MCF 10A (cell line): ENCODE measurements at regions of chr16 and their contacts with region 1.

Region 1: GRCh38 chr16:83967806-83968305 is at the start of gene NECAB2:
- DNase-seq: peak; percentile 23
- H3K4me3 Mint-ChIP-seq: peak within 1 kb of the TSS; percentile 69
- H3K27ac Mint-ChIP-seq: no peak within 1 kb of the TSS
- H3K4me1 Mint-ChIP-seq: peaks cover 6% of the 10 kb centered on the region
- H3K27me3 Mint-ChIP-seq: peaks cover 10% of the 10 kb centered on the region
- CTCF ChIP-seq: peak; percentile 86
- total RNA-seq, gene NECAB2: 2.3 and 3.6 TPM in 2 replicates

Region 2: DNA sequence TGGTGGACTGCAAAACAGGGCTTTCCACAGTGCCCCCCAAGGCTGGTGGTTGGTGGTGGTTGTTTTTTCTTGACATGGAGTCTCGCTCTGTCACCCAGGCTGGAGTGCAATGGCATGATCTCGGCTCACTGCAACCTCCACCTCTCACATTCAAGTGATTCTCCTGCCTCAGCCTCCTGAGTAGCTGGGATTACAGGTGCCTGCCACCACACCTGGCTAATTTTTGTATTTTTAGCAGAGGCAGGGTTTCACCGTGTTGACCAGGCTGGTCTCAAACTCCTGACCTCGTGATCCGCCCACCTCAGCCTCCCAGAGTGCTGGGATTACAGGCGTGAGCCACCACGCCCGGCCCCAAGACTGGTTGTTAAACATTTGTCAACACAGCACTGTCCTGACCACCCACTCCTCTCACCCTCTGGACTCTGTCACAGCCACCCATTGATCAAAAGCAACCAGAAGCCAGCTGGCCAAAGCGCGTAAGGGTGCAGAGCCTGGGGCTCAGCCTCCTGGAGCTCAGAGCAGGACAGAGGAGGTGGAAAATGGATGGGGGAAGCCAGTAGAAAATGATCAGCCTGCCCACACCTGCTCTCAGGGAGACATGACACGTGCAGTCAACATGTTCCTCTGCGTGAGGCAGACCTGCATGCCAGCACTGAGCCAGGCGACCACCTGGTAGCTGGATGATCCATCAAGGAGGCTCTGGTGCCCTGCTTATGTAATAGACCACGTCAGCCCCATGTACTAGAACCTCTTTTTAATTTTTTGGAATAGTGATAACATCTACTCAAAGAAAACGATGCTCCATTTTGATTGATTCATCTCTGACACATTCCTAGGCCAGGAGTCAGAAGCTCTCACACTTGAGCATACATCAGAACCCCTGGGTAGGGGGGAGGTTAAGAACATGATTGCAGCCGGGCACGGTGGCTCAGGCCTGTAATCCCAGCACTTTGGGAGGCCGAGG is 29.7 kb before region 1 on chr16:
- CTCF ChIA-PET with region 1: no interaction called
- POLR2A ChIA-PET with region 1: no interaction called
- intact Hi-C with region 1: no loop called
- DNase-seq: no peak
- H3K4me3 Mint-ChIP-seq: no peak overlapping the region
- H3K27ac Mint-ChIP-seq: no peak overlapping the region
- H3K4me1 Mint-ChIP-seq: no peaks in the 10 kb centered on the region
- H3K27me3 Mint-ChIP-seq: peaks cover 16% of the 10 kb centered on the region
- CTCF ChIP-seq: no peak

Region 3: GRCh38 chr16:84044118-84044488 is 76.2 kb after region 1 on chr16:
- CTCF ChIA-PET with region 1: interaction called, 12 read pairs
- POLR2A ChIA-PET with region 1: no interaction called
- intact Hi-C with region 1: no loop called
- DNase-seq: peak; percentile 57
- H3K4me3 Mint-ChIP-seq: no peak overlapping the region
- H3K27ac Mint-ChIP-seq: no peak overlapping the region
- H3K4me1 Mint-ChIP-seq: peaks cover 12% of the 10 kb centered on the region
- H3K27me3 Mint-ChIP-seq: peaks cover 31% of the 10 kb centered on the region
- CTCF ChIP-seq: peak; percentile 57

Region 4: GRCh38 chr16:84055366-84055765 is 87.5 kb after region 1 on chr16:
- CTCF ChIA-PET with region 1: interaction called, 13 read pairs
- POLR2A ChIA-PET with region 1: interaction called, 3 read pairs
- intact Hi-C with region 1: no loop called
- DNase-seq: no peak
- H3K4me3 Mint-ChIP-seq: no peak overlapping the region
- H3K27ac Mint-ChIP-seq: no peak overlapping the region
- H3K4me1 Mint-ChIP-seq: no peaks in the 10 kb centered on the region
- H3K27me3 Mint-ChIP-seq: no peaks in the 10 kb centered on the region
- CTCF ChIP-seq: no peak

Region 5: GRCh38 chr16:84314373-84314772 is 346.5 kb after region 1 on chr16:
- CTCF ChIA-PET with region 1: no interaction called
- POLR2A ChIA-PET with region 1: no interaction called
- intact Hi-C with region 1: no loop called
- DNase-seq: no peak
- H3K4me3 Mint-ChIP-seq: no peak overlapping the region
- H3K27ac Mint-ChIP-seq: no peak overlapping the region
- H3K4me1 Mint-ChIP-seq: no peaks in the 10 kb centered on the region
- H3K27me3 Mint-ChIP-seq: peaks cover 31% of the 10 kb centered on the region
- CTCF ChIP-seq: no peak